SK-N-SH (cell line): ENCODE measurements at regions of chr5 and their contacts with region 1.

Region 1: GRCh38 chr5:58460732-58461286 is 923 bp upstream of the PLK2 start:
- DNase-seq: peak; percentile 83
- H3K4me3 ChIP-seq: peak overlapping the region; percentile 90 to 93
- H3K27ac ChIP-seq: peak overlapping the region; percentile 85 to 87
- H3K4me1 ChIP-seq: peaks cover 0 to 7% of the 10 kb centered on the region in 2 experiments; a peak in 2 of 4 replicates
- H3K27me3 ChIP-seq: no peaks in the 10 kb centered on the region
- CTCF ChIP-seq: peak; percentile 76
- EP300 ChIP-seq: 0 out of 4 replicates have a peak, but pooled peaks of 1 of the 2 experiments have one; percentile 14
- RAD21 ChIP-seq: peak; percentile 95

Region 2: DNA sequence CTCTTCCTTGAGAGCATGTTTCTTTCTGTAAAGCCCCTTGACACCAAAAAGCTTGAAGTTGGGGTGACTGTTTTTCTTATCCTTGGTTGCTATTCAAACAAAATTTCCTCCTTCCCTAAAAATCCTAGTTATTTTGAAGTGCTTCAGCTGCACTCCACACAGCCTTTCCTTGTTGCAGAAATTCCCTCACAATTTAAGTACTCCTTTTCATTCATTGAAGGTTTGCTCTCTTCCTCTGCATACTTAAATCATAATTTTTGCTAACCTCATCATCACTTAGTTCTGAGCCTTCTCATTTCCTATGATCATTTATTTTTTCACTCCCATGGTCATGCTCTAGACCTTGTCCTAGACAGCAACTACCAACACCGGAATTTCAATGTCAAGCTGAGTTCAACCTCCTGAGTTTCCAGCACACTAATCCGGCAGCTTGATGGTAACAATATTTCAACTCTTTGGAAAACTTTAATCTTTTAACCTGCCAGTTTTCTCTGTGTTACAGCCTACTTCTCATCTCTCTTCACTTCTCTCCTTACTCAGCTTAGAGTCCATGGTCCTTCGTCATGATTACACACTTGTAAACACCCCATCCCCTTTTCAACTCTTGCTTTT is 899.5 kb before region 1 on chr5:
- CTCF ChIA-PET with region 1: no interaction called
- POLR2A ChIA-PET with region 1: no interaction called
- DNase-seq: no peak
- H3K4me3 ChIP-seq: no peak overlapping the region
- H3K27ac ChIP-seq: no peak overlapping the region
- H3K4me1 ChIP-seq: no peaks in the 10 kb centered on the region
- H3K27me3 ChIP-seq: no peaks in the 10 kb centered on the region
- CTCF ChIP-seq: no peak
- EP300 ChIP-seq: no peak
- RAD21 ChIP-seq: no peak

Region 3: DNA sequence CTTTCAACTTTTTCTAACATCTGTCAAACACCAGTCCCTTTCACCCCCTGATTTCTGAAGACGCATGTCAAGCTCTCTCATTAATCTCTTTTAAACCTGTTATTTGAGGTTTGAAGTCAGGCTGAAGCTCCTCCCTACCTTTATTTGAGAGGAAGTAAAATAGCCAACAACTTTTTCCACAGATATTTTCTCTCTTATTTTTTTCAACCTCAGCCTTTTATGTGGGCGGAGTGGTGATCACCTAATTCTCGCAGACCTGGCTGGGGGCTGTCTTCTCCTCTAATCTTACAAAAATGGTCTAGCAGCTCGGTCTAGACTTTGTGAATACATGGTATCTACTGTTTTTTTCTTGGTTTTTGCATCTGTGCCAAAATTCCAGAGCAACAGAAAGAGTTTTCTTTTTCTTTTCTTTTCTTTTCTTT is 582.5 kb before region 1 on chr5:
- CTCF ChIA-PET with region 1: interaction called, 42 read pairs
- POLR2A ChIA-PET with region 1: no interaction called
- DNase-seq: no peak
- H3K4me3 ChIP-seq: no peak overlapping the region
- H3K27ac ChIP-seq: no peak overlapping the region
- H3K4me1 ChIP-seq: no peaks in the 10 kb centered on the region
- H3K27me3 ChIP-seq: no peaks in the 10 kb centered on the region
- CTCF ChIP-seq: no peak
- EP300 ChIP-seq: no peak
- RAD21 ChIP-seq: no peak

Region 4: DNA sequence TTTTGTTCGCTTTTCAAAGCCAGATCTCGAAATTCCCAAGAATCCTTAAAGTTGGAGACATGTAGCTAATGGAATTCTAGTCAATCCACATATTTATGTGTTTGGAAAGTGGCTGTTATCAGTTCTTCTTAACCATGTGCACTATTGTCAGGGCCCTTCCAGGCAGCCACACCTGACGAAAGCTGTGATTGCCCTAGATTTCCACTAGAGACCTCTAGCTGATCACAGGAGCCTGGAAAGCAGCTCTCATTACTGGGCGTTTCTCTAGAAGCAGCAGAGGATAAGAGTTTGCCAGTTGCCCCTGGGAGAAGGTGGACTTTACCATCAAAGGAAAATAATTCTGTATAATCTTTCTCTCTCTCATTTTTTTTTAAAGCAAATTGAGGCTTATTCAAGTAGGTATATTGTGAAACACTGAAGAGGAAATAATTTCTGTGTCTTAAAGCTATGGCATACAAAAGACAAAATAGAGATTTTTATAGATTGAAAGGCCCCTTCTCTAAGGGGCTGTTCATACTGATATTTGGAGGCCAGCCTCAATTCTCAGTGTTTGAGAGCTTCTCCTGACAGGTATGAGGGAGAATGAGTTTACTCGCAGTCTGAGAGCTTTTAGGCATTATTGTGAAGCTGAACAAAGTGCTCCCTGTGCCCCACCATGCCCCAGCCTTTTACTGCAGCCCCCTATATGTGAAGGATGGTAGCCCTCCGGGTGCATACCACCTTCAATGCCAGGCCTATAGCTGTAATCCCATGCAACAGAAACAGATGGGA is 572.8 kb before region 1 on chr5:
- CTCF ChIA-PET with region 1: interaction called, 68 read pairs
- POLR2A ChIA-PET with region 1: interaction called, 6 read pairs
- DNase-seq: peak; percentile 61
- H3K4me3 ChIP-seq: no peak overlapping the region
- H3K27ac ChIP-seq: peak overlapping the region in 1 of 2 experiments; percentile 12; a peak in 2 of 4 replicates
- H3K4me1 ChIP-seq: peaks cover 3 to 18% of the 10 kb centered on the region in 2 experiments; a peak in 3 of 4 replicates
- H3K27me3 ChIP-seq: no peaks in the 10 kb centered on the region
- CTCF ChIP-seq: peak; percentile 66
- EP300 ChIP-seq: no peak
- RAD21 ChIP-seq: peak; percentile 92